Activated CD4-positive, alpha-beta memory T cell treated with anti-CD3 and anti-CD28 coated beads for 36 hours (primary cell): ENCODE measurements at regions of chr22 and their contacts with region 1.

Region 1: GRCh38 chr22:30634471-30635233 is 929 bp upstream of the SLC35E4 start:
- DNase-seq: peak; percentile 95
- H3K4me3 Mint-ChIP-seq: peak overlapping the region; percentile 81
- H3K27ac Mint-ChIP-seq: peak overlapping the region; percentile 88
- H3K4me1 Mint-ChIP-seq: peaks cover 20% of the 10 kb centered on the region
- H3K27me3 Mint-ChIP-seq: no peaks in the 10 kb centered on the region

Region 2: GRCh38 chr22:30582788-30583545 is 51.7 kb before region 1 on chr22:
- CTCF ChIA-PET with region 1: no interaction called
- POLR2A ChIA-PET with region 1: no interaction called
- intact Hi-C with region 1: no loop called
- DNase-seq: no peak
- H3K4me3 Mint-ChIP-seq: no peak overlapping the region
- H3K27ac Mint-ChIP-seq: no peak overlapping the region
- H3K4me1 Mint-ChIP-seq: no peaks in the 10 kb centered on the region
- H3K27me3 Mint-ChIP-seq: no peaks in the 10 kb centered on the region

Region 3: GRCh38 chr22:30649430-30650007 is 14.9 kb after region 1 on chr22:
- CTCF ChIA-PET with region 1: interaction called, 46 read pairs
- POLR2A ChIA-PET with region 1: interaction called, 16 read pairs
- intact Hi-C with region 1: loop called (anchors 1 kb)
- DNase-seq: peak; percentile 94
- H3K4me3 Mint-ChIP-seq: no peak overlapping the region
- H3K27ac Mint-ChIP-seq: peak overlapping the region; percentile 85
- H3K4me1 Mint-ChIP-seq: peaks cover 31% of the 10 kb centered on the region
- H3K27me3 Mint-ChIP-seq: no peaks in the 10 kb centered on the region

Region 4: DNA sequence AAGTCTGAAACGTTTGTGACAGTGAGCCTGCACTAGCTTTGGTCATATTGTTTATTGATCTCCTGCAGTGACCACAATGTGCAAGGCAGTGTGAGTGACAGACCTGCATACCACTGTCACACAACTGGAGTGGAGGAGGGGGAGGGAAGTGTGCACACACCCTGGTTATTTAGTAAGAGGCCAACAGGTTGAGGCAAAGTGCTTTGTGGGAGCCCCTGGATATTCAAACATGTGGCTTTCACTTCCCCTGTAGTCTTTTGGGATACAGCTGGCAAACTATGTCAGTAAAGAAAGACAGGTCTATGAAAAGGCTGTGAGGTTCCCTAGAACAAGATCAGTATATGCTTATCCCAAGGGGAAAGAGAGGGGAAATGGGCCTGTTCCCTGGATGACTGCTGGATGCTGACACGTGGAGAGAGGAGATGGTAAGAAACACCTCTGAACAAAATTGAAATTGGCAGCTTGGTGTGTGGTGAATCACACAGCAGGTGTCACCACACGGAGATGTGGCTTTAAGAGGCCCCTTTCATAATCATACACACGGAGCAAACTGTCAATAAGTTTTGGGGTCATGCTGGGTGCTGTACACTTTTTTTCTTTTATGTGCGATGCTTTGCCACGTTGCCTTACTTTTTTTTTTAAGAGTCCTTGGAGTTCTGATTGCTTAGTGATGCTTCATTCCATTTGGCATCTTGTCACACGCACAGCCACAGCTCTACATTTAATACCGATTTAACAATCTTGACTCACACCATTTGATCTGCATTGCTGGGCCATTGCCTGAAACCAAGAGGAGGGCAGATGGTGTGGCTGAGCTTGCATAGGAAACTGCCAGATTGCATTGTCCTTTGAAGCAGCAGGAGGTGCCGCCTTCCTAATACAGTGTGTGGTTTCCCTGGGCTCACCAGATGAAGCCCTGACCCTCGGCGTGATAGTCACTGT is 71.3 kb after region 1 on chr22:
- CTCF ChIA-PET with region 1: interaction called, 12 read pairs
- POLR2A ChIA-PET with region 1: no interaction called
- intact Hi-C with region 1: loop called (anchors 1 kb)
- DNase-seq: peak; percentile 56
- H3K4me3 Mint-ChIP-seq: no peak overlapping the region
- H3K27ac Mint-ChIP-seq: peak overlapping the region; percentile 57
- H3K4me1 Mint-ChIP-seq: peaks cover 23% of the 10 kb centered on the region
- H3K27me3 Mint-ChIP-seq: no peaks in the 10 kb centered on the region

Region 5: DNA sequence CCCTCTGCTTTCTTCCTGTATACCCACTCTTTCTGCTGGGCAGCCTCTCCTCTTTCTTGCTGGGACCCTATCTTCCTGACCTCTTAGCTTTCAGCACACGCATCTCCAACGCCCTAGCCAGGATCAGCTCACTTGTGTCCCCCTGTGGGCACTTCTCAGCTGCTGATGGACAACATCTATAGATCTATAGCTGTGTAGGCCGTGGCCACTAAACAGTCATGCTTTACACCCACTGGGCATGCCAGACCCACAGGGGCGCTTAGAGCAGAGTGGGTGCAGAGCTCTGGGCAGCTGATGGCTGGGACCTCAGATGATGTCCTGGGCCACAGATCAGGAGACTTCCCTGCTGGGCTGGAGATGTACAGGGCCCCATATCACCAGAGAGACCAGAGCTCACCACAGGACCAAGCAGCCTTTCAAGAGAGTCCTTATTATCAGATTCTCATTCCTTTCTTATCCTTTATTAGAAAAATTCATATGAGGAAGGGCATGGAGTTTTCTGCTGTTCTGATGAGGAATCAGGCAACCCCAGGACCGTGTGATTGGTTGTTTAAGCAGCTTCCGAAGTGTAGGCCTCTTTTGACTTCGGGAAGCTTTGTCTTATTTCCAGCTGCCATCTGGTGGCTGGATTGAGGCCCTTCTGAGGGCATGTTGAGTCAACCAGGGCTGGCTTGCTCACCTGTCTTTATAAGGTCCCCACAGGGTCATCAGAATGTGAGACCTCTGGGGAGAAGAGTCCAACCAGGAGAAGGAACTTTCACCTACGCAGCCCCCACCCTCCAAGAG is 120.5 kb after region 1 on chr22:
- CTCF ChIA-PET with region 1: interaction called, 266 read pairs
- POLR2A ChIA-PET with region 1: interaction called, 17 read pairs
- intact Hi-C with region 1: loop called (anchors 1 kb)
- DNase-seq: peak; percentile 77
- H3K4me3 Mint-ChIP-seq: no peak overlapping the region
- H3K27ac Mint-ChIP-seq: no peak overlapping the region
- H3K4me1 Mint-ChIP-seq: no peaks in the 10 kb centered on the region
- H3K27me3 Mint-ChIP-seq: no peaks in the 10 kb centered on the region

Region 6: GRCh38 chr22:30816413-30816812 is 181.8 kb after region 1 on chr22:
- CTCF ChIA-PET with region 1: no interaction called
- POLR2A ChIA-PET with region 1: no interaction called
- intact Hi-C with region 1: no loop called
- DNase-seq: no peak
- H3K4me3 Mint-ChIP-seq: no peak overlapping the region
- H3K27ac Mint-ChIP-seq: no peak overlapping the region
- H3K4me1 Mint-ChIP-seq: no peaks in the 10 kb centered on the region
- H3K27me3 Mint-ChIP-seq: peaks cover 13% of the 10 kb centered on the region

Region 7: GRCh38 chr22:30920407-30920806 is 285.8 kb after region 1 on chr22:
- CTCF ChIA-PET with region 1: interaction called, 20 read pairs
- POLR2A ChIA-PET with region 1: no interaction called
- intact Hi-C with region 1: loop called (anchors 1 kb)
- DNase-seq: peak; percentile 87
- H3K4me3 Mint-ChIP-seq: peak overlapping the region; percentile 40
- H3K27ac Mint-ChIP-seq: peak overlapping the region; percentile 3
- H3K4me1 Mint-ChIP-seq: peaks cover 12% of the 10 kb centered on the region
- H3K27me3 Mint-ChIP-seq: no peaks in the 10 kb centered on the region